Right ventricle myocardium superior (tissue), 1 donor: ENCODE measurements at regions of chr9 and their contacts with region 1.

Region 1: DNA sequence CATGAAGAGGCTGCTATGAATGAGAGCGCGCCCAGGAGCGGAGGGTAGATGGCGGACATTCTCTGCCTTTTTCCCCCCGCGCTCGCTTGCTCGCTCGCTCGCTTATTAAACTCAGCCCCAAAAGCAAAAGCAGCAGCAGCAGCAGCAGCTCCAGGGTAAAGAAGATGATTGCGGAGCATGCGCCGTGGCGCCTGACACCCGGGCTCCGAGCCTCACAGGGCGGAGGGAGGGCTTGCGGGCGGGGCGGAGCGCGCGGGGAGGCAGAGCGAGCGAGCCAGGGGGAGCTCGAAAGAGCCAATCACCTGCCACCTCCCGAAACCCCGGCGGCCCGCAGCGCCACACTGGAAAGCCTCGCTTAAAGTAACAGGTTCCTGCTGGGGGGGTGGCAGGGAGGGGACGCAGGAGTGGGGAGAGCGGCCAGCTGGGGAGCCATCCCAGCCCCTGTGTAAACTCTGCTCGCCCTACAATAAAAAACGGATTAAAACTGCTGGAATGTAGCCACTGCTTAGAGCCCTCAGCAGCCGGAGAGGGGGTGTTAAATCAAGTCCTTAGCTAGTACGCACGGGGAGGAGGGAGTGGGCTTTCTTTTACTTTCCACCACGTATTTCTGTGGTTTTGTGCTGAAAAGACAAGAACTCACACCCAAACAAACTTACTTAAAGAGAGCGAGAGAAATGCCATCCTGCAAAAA is at the start of gene MLLT3:
- DNase-seq: peak; percentile 98
- ATAC-seq: peak; percentile 95
- total RNA-seq, gene MLLT3: 11.4 TPM

Region 2: DNA sequence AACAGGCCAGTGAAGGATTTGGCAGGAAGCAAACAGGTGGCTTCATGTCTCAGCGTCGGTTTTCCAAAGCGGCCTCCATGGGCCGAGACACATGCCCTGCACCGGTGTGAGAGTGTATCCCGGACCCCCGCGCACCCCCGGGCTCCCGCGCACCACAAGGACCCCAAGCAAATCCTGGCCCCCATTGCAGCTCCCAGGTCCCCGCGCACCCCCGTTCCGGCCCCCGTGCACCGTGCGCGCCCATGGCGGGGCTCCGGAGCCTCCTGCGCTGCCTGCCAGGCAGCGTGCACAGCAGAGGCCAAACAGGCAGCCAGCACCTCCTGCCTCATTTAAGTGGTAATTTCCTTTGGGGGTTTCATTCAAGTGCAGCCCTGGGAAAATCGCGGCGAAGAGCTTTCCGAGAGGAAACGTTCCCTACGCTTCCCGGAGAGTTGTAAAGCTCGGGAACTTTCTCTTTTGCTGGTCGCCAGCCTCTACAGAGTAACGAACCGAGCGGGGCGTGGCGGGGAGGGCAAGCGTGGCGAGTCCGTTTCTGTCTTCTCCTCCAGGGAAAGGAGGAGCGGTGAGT is 688.1 kb before region 1 on chr9:
- intact Hi-C with region 1: loop called (anchors 10 kb)
- DNase-seq: peak; percentile 59
- ATAC-seq: peak; percentile 73

Region 3: DNA sequence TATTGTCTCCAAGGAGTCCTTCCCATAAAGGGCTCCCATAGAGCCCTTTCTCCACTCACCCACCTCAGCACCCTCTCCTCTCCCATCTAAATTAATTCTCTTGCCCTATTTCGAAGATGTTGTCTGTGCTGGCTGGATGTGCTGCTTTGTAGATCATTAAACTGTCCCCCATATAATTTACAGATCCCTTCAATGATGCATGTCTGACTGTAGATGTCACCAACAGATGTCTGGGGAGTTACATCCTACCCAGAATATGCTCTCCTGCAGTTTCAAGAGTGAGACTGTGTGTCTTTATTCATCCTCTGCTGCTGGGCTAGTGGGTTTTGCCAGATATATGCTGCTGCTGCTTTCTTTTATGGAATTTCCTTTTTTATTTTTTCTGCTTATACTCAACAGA is 351.4 kb before region 1 on chr9:
- intact Hi-C with region 1: no loop called
- DNase-seq: no peak
- ATAC-seq: no peak

Region 4: DNA sequence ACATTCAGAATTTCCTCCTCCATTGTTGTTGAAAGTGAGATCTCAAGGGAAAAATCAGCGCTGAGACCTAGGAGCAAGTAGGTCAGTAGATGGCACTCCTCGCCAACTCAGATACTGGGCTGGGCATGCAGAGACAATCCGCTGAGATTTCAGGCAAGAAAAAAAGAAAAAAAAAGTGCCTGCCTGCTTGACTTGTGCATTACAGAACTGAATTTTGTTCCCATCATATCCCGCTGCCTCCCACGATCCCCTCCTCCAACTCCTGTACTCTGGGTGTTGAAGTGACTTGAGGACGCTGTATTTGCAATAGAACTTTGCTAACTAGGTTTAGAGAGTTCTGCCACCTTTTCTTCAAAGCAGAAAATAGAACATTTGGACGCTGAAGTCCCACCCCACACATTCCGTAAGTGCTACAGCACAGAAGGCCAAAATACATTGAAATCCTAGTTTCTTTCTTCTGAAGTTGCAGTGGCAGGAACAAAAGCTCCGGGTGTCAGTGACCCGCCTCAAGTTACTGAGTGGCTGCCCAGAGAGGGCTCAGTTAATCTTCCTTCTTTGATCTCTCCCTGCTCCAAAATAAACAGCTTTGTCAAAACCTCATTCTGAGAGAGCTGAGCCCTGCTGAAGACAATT is 266.0 kb before region 1 on chr9:
- intact Hi-C with region 1: loop called (anchors 5 kb)
- DNase-seq: peak; percentile 66
- ATAC-seq: peak; percentile 89

Region 5: GRCh38 chr9:20684035-20684872 is 61.8 kb after region 1 on chr9 and contains the start of gene FOCAD:
- intact Hi-C with region 1: loop called (anchors 5 kb)
- DNase-seq: peak; percentile 98
- ATAC-seq: peak; percentile 99
- total RNA-seq, gene FOCAD: 28.7 TPM

Region 6: DNA sequence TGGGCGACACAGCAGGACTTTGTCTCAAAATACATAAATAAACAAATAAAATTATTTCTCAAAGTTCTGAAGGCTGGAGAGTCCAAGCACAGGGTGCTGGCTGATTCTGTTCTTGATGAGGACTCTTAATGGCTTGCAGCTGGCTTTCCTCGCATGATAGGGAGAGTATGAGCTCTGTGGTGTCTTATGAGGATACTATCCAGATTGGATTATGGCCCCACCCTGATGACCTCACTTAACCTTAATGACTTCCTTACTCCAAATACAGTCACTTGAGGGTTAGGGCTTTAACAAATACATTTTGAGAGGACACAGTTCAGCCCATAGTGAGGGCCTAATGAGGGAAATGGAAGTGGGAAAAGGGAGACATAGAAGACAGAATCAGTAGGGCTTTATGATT is 149.3 kb after region 1 on chr9:
- intact Hi-C with region 1: no loop called
- DNase-seq: no peak
- ATAC-seq: no peak

Region 7: DNA sequence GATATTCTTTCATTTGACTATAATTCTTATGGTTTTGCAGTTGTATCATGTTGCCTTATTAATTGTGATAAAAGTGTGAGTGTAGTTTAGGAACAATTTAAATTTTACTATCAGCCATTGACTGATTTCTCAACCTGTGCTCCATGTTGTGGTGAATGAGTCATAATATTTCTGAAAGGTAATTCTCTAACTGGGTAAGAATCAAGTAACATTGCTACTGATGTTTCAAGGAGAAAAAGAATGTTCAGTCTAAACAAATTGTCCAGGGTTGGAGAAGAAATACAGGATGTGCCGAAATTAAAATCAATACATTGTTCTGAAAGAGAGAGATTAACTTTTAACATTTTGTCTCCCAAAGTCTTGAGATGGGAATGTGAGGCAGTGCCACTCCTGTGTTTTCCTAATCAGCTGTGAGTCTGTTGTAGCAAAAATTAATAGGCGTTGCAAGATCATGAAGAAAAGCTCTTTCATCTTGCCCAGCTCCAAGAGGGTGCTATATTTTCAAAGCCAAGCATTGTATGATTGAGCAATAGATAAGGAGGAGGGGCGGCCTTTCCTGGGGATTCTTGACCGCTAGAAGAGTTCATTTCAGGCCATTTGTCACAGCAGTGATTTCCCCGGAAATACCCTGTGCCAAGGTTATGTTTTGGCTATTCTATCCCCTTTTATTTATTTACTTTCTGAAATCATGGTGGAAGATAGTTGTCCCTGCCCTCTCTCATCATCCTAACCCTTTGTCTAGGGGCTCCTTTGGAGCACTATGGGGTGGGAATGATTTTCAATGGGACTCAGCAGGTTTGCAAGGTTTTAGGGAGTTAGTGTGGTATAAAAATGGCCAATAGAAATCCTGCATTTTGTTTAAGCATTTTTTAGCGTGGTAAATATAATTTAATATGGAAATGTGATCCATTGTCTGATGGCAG is 213.2 kb after region 1 on chr9:
- intact Hi-C with region 1: no loop called
- DNase-seq: no peak
- ATAC-seq: no peak

Region 8: DNA sequence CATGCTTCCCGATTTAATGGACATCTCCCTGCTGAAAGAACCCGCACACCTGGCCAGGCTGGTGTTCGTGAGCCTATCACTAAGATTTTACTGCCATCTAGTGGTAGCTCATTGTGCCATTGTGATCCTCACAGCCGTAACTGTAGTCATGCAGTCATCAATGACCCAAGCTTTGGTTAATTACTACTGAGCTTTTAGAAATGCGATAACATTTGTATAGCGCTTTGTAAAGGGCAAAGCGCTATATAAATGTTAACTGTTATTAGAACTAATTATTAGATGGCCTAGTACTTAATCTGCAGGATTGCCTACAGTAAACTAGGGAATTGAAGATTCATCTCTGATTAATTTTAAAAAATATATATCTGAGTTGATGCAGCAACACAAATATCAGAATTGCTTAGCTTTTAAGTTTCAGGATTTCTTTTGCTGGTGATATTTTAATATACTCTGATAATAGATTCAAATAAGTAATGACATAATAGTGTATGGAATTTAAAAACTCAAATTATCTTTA is 318.8 kb after region 1 on chr9:
- intact Hi-C with region 1: loop called (anchors 5 kb)
- DNase-seq: peak; percentile 57
- ATAC-seq: peak; percentile 92